GM10248 (cell line): ENCODE measurements at regions of chr11 and their contacts with region 1.

Region 1: GRCh38 chr11:17171916-17172315 is 35.9 kb downstream of the PIK3C2A start:
- DNase-seq: no peak
- CTCF ChIP-seq: no peak

Region 2: DNA sequence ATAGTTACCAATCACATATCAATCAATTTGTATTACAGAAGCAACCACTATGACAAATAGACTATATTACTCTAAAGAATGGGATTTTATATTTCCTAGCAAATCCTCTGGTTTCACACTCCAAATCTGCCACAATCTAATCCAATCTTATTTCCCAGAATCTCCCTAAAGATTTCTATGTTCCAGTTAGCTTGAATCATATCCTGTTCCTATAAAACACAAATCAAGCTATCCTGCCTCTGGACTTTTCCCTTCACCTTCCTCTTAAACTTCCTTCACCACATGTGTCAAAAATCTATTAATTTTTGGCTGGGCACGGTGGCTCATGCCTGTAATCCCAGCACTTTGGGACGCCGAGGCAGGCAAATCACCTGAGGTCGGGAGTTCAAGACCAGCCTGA is 14.2 kb before region 1 on chr11:
- CTCF ChIA-PET with region 1: interaction called, 24 read pairs
- POLR2A ChIA-PET with region 1: no interaction called
- DNase-seq: no peak
- CTCF ChIP-seq: no peak